Aorta (tissue), 5 donors: ENCODE measurements at regions of chr17 and their contacts with region 1.

Region 1: GRCh38 chr17:15502369-15503112 is 35.1 kb upstream of the CDRT4 start:
- DNase-seq: peak; percentile 95 to 97
- ATAC-seq: peak; percentile 96
- H3K4me3 ChIP-seq: peak overlapping the region; percentile 8 to 13
- H3K27ac ChIP-seq: peak overlapping the region; percentile 15 to 17
- H3K4me1 ChIP-seq: no peaks in the 10 kb centered on the region
- H3K27me3 ChIP-seq: no peaks in the 10 kb centered on the region

Region 2: DNA sequence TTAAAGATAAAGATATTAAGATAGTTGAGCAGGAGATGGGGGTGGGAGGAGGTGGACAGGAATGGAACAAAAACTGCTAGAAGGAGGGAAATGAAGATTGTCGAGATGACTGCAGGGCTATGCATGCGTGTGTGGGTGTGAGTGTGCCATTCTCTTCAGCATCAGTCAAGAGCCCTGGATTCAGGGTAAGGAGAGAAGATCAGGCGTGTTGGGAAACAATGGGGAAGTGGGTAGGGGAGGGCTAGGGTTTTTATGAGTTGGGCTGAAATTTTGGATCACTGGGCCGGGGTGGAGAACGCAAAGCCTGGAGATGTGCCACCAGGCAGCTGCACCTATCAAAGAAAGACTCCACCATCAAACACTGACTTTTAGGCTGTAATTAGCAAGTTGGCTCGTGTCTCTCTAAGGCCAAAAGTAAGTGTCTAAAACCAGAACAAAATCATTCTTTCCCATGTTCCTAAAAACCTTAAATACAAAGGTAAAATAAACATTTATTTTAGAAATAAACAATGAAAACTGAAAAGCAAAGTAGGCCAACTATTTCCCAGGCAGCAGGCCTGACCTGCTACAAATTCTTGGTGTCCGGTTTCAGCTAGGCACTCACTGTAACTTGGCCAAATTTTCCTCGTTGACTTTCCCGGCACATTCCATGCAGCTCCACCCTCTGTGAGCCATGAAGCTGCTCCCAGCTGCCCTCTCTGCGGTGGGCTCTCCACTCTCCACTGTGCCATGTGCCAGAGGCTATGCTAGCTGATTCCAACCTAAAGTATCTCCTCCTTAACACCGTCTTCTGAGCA is 39.4 kb before region 1 on chr17:
- intact Hi-C with region 1: loop called in 1 of 2 experiments (anchors 2 kb)
- DNase-seq: peak; percentile 73 to 78
- ATAC-seq: peak; percentile 72
- H3K4me3 ChIP-seq: no peak overlapping the region
- H3K27ac ChIP-seq: peak overlapping the region in 1 of 2 donors; percentile 92
- H3K4me1 ChIP-seq: peaks cover 0 to 1% of the 10 kb centered on the region in 2 donors
- H3K27me3 ChIP-seq: no peaks in the 10 kb centered on the region